Activated T-helper 1 cell treated with anti-CD3 and anti-CD28 coated beads, Interleukin-12 subunit alpha, Interleukin-12 subunit beta, Interleukin-2, Interleukin-4 antibody, amounts not matched to agents 30 ng/mL and 10 ng/mL and 1 ng/mL, durations not matched to agents 14 hours and 24 hours and 36 hours (primary cell): ENCODE measurements at regions of chr18 and their contacts with region 1.

Region 1: GRCh38 chr18:44597797-44598196 is 82.9 kb upstream of the SETBP1 start:
- DNase-seq: no peak
- H3K4me3 Mint-ChIP-seq: no peak overlapping the region
- H3K27ac Mint-ChIP-seq: no peak overlapping the region
- H3K4me1 Mint-ChIP-seq: peaks cover 6% of the 10 kb centered on the region
- H3K27me3 Mint-ChIP-seq: peaks cover 5% of the 10 kb centered on the region

Region 2: GRCh38 chr18:44630118-44630517 is 32.3 kb after region 1 on chr18:
- intact Hi-C with region 1: loop called (anchors 1 kb)
- DNase-seq: no peak
- H3K4me3 Mint-ChIP-seq: no peak overlapping the region
- H3K27ac Mint-ChIP-seq: no peak overlapping the region
- H3K4me1 Mint-ChIP-seq: peaks cover 7% of the 10 kb centered on the region
- H3K27me3 Mint-ChIP-seq: peaks cover 12% of the 10 kb centered on the region